ENCODE measurements at regions of chr22 and their contacts with region 1.

Region 1: GRCh38 chr22:37519268-37520195 is at the start of gene CARD10:
- DNase-seq: no peak
- H3K4me3 ChIP-seq: peak within 1 kb of the TSS; percentile 54
- H3K27me3 ChIP-seq: no peaks in the 10 kb centered on the region
- CTCF ChIP-seq: no peak
- polyA plus RNA-seq, gene CARD10: 2.3 and 4.5 TPM in 2 replicates

Region 2: GRCh38 chr22:37561212-37562048 is 41.9 kb after region 1 on chr22:
- CTCF ChIA-PET with region 1: no interaction called
- POLR2A ChIA-PET with region 1: interaction called, 14 read pairs
- DNase-seq: no peak
- H3K4me3 ChIP-seq: peak overlapping the region; percentile 83
- H3K27me3 ChIP-seq: no peaks in the 10 kb centered on the region
- CTCF ChIP-seq: peak; percentile 92

Measured in BJ (cell line).